ENCODE measurements at regions of chr4 and their contacts with region 1.

Region 1: GRCh38 chr4:103204111-103204510 is 6.0 kb upstream of the CENPE start:
- DNase-seq: no peak
- H3K4me3 ChIP-seq: no peak overlapping the region
- H3K4me3 Mint-ChIP-seq: no peak overlapping the region
- H3K27ac Mint-ChIP-seq: no peak overlapping the region
- H3K4me1 ChIP-seq: peaks cover 10% of the 10 kb centered on the region; the same call in 1 of the 2 replicates
- H3K4me1 Mint-ChIP-seq: peaks cover 23% of the 10 kb centered on the region
- H3K27me3 ChIP-seq: no peaks in the 10 kb centered on the region
- H3K27me3 Mint-ChIP-seq: no peaks in the 10 kb centered on the region
- CTCF ChIP-seq: peak; percentile 37 to 40

Region 2: GRCh38 chr4:103156106-103156505 is 48.0 kb before region 1 on chr4:
- CTCF ChIA-PET with region 1: no interaction called
- POLR2A ChIA-PET with region 1: no interaction called
- intact Hi-C with region 1: no loop called
- DNase-seq: no peak
- H3K4me3 ChIP-seq: no peak overlapping the region
- H3K4me3 Mint-ChIP-seq: no peak overlapping the region
- H3K27ac Mint-ChIP-seq: no peak overlapping the region
- H3K4me1 ChIP-seq: no peaks in the 10 kb centered on the region
- H3K4me1 Mint-ChIP-seq: no peaks in the 10 kb centered on the region
- H3K27me3 ChIP-seq: no peaks in the 10 kb centered on the region
- H3K27me3 Mint-ChIP-seq: no peaks in the 10 kb centered on the region
- CTCF ChIP-seq: no peak

Region 3: DNA sequence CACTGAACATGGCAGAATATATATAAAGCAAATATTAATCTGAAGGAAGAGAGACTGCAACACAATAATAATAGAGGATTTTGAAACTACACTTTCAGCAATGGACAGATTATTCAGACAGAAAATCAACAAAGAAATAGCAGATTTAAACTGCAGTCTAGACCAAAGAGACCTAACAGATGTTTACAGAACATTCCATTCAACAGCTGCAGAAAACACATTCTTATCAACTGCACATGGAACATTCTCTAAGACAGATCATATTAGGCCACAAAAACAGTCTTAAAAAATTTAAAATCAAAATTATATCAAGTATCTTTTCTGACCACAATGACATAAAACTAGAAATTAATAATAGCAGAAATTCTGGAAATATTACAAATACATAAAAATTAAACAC is 33.1 kb before region 1 on chr4:
- CTCF ChIA-PET with region 1: no interaction called
- POLR2A ChIA-PET with region 1: no interaction called
- intact Hi-C with region 1: no loop called
- DNase-seq: no peak
- H3K4me3 ChIP-seq: no peak overlapping the region
- H3K4me3 Mint-ChIP-seq: no peak overlapping the region
- H3K27ac Mint-ChIP-seq: no peak overlapping the region
- H3K4me1 ChIP-seq: no peaks in the 10 kb centered on the region
- H3K4me1 Mint-ChIP-seq: no peaks in the 10 kb centered on the region
- H3K27me3 ChIP-seq: no peaks in the 10 kb centered on the region
- H3K27me3 Mint-ChIP-seq: no peaks in the 10 kb centered on the region
- CTCF ChIP-seq: no peak

Region 4: GRCh38 chr4:103364083-103364482 is 160.0 kb after region 1 on chr4:
- CTCF ChIA-PET with region 1: no interaction called
- POLR2A ChIA-PET with region 1: no interaction called
- intact Hi-C with region 1: loop called (anchors 5 kb)
- DNase-seq: no peak
- H3K4me3 ChIP-seq: no peak overlapping the region
- H3K4me3 Mint-ChIP-seq: no peak overlapping the region
- H3K27ac Mint-ChIP-seq: no peak overlapping the region
- H3K4me1 ChIP-seq: peaks cover 16% of the 10 kb centered on the region
- H3K4me1 Mint-ChIP-seq: peaks cover 14% of the 10 kb centered on the region
- H3K27me3 ChIP-seq: no peaks in the 10 kb centered on the region
- H3K27me3 Mint-ChIP-seq: no peaks in the 10 kb centered on the region
- CTCF ChIP-seq: no peak

Region 5: GRCh38 chr4:103478729-103479128 is 274.6 kb after region 1 on chr4:
- CTCF ChIA-PET with region 1: interaction called, 3 read pairs
- POLR2A ChIA-PET with region 1: no interaction called
- intact Hi-C with region 1: loop called (anchors 2 kb)
- DNase-seq: peak in 1 of 2 experiments; percentile 9
- H3K4me3 ChIP-seq: no peak overlapping the region
- H3K4me3 Mint-ChIP-seq: no peak overlapping the region
- H3K27ac Mint-ChIP-seq: no peak overlapping the region
- H3K4me1 ChIP-seq: peaks cover 19% of the 10 kb centered on the region
- H3K4me1 Mint-ChIP-seq: no peaks in the 10 kb centered on the region
- H3K27me3 ChIP-seq: no peaks in the 10 kb centered on the region
- H3K27me3 Mint-ChIP-seq: no peaks in the 10 kb centered on the region
- CTCF ChIP-seq: no peak

Region 6: DNA sequence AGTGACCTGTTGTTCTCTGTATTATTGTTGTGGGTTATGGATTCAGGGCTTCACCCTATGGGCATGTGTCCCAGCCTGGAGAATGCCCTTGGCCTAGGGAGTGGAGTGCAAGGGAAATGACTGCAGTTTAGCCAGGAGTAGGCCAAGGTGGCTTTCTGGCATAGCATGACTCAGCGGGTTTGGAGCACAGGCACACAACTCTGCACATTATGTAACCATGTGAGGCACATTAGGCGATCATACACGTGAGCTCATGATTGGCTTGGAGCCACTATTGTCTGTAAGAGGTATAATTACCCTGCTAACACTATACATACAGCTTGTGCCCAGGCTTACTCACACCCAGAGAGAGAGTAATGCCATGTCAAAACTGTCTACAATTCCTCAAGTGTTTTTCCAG is 550.7 kb after region 1 on chr4:
- CTCF ChIA-PET with region 1: no interaction called
- POLR2A ChIA-PET with region 1: no interaction called
- intact Hi-C with region 1: loop called (anchors 10 kb)
- DNase-seq: no peak
- H3K4me3 ChIP-seq: no peak overlapping the region
- H3K4me3 Mint-ChIP-seq: no peak overlapping the region
- H3K27ac Mint-ChIP-seq: no peak overlapping the region
- H3K4me1 ChIP-seq: no peaks in the 10 kb centered on the region
- H3K4me1 Mint-ChIP-seq: no peaks in the 10 kb centered on the region
- H3K27me3 ChIP-seq: no peaks in the 10 kb centered on the region; the same call in 1 of the 2 replicates
- H3K27me3 Mint-ChIP-seq: no peaks in the 10 kb centered on the region
- CTCF ChIP-seq: no peak

Region 7: GRCh38 chr4:103915224-103915869 is 711.2 kb after region 1 on chr4:
- CTCF ChIA-PET with region 1: no interaction called
- POLR2A ChIA-PET with region 1: no interaction called
- intact Hi-C with region 1: loop called (anchors 1 kb)
- DNase-seq: peak in 1 of 2 experiments; percentile 7
- H3K4me3 ChIP-seq: no peak overlapping the region
- H3K4me3 Mint-ChIP-seq: no peak overlapping the region
- H3K27ac Mint-ChIP-seq: no peak overlapping the region
- H3K4me1 ChIP-seq: no peaks in the 10 kb centered on the region
- H3K4me1 Mint-ChIP-seq: no peaks in the 10 kb centered on the region
- H3K27me3 ChIP-seq: no peaks in the 10 kb centered on the region
- H3K27me3 Mint-ChIP-seq: peaks cover 3% of the 10 kb centered on the region
- CTCF ChIP-seq: peak; percentile 50 to 51

Measured in Caco-2 (cell line).